ENCODE measurements at regions of chr5 and their contacts with region 1.

Region 1: DNA sequence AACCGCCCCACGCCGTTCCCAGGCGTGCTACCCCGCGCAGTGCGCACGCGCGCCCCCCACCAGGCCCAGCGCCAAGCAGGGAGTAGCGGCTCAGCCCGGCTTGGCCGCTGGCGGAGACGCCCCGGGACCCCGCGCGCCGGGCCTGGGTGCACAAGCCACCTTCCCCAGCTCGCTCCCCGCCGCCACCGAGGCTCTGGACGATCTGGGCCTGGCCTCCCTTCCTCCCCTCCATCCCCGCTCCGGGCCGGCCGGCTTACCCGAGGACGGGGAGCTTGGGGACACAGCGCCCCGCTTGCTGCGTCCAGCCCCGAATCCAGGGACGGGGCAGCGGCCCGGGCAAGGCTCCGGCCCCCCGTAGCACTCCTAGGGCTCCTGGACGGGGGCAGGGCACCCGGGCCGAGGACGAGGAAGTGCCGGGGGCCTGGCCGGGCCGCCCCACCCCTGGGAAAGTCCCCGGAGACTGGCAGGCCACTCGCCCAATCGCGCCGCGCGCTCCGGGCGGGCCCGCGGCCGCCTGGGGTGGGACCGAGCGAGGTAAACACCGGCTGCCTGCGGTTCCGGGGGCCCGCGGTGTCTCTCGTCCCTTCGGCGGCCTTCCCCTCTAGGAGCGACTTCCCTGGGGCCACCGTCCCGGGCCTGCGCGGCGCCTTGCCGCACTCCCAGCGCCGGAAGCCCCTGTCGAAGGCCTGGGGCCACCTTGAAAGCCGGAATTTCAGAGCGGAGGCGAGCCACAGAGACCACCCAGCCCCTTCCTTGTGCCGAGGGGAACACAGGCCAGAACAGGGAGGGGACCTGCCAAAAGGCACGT is at the start of gene TNIP1:
- DNase-seq: peak; percentile 91 to 97 (median 93)
- H3K4me3 ChIP-seq: peak within 1 kb of the TSS; percentile 61 to 87
- H3K4me3 Mint-ChIP-seq: peak within 1 kb of the TSS; percentile 88 to 98 (median 94)
- H3K27ac ChIP-seq: peak within 1 kb of the TSS; percentile 99
- H3K27ac Mint-ChIP-seq: peak within 1 kb of the TSS; percentile 76 to 98 (median 96)
- H3K4me1 ChIP-seq: peaks cover 89% of the 10 kb centered on the region
- H3K4me1 Mint-ChIP-seq: peaks cover 69 to 94% (median 76%) of the 10 kb centered on the region in 4 donors
- H3K27me3 ChIP-seq: no peaks in the 10 kb centered on the region
- H3K27me3 Mint-ChIP-seq: no peaks in the 10 kb centered on the region
- total RNA-seq, gene TNIP1: 227 to 233 TPM

Region 2: DNA sequence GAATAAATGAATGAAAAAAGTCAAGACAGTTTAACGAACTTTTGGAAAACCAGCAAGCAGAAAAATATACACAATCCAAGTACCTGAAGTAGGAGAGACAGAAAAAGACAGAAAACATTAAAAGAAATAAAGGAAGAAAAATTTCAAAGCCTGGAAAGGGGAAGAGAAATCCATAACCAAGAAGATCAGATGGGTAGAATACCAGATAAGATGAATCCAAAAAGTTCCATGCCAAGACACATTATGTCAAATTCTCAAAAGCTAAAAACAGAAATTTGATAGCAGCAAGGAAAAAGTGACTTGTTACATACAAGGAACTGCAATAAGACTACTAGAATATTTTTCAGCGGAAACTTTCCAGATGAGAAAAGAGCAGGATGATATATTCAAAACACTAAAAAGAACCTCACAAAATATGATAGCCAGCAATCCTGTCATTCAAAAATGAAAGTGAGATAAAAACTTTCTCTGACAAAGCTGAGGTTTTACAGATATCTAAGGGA is 168.5 kb before region 1 on chr5:
- CTCF ChIA-PET with region 1: no interaction called
- POLR2A ChIA-PET with region 1: no interaction called
- intact Hi-C with region 1: no loop called
- DNase-seq: no peak
- H3K4me3 ChIP-seq: no peak overlapping the region
- H3K4me3 Mint-ChIP-seq: no peak overlapping the region
- H3K27ac ChIP-seq: no peak overlapping the region
- H3K27ac Mint-ChIP-seq: peak overlapping the region in 1 of 7 donors; percentile 25
- H3K4me1 ChIP-seq: no peaks in the 10 kb centered on the region
- H3K4me1 Mint-ChIP-seq: no peaks in the 10 kb centered on the region
- H3K27me3 ChIP-seq: no peaks in the 10 kb centered on the region
- H3K27me3 Mint-ChIP-seq: peaks cover 1 to 2% of the 10 kb centered on the region in 2 donors

Region 3: DNA sequence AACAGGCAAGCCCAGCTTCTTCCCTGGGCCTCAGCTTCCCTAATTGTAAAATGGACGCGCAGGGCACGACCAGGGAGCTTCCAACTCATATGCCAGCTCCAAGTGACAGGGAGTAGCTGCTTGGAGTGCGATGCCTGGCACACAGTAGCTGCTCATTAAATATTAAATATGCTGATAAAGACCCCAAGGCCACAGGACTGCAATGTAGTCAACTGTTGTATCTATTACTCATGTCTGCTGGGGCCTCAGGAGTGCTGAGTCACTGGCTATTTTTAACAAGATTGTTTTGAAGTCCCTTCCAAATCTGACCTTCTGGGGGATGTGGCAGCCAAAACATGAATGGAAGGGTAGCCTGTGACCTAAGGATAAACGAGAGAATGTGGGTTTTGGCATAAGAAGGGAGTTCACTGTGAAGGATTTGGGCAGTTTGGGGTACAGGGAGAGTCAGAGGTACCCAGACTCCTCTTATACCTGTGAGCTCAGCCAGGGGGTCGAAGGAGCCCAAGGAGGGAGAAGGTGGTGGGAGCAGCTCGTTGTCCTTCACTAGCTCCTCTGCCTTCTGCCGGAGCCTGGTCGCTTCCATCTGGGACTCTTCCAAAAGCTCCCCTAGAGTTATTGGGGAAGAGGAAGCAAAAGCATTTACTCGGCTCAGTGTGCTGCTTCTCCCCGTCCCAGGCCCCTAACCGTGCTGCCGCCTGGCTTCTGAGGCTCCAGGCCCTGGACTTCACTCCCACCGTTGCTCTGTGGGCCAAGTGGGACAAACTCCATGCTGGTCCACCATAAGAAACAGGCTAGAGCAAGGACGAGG is 17.5 kb before region 1 on chr5:
- CTCF ChIA-PET with region 1: interaction called, 7 read pairs
- POLR2A ChIA-PET with region 1: interaction called, 31 read pairs
- intact Hi-C with region 1: no loop called
- DNase-seq: no peak
- H3K4me3 ChIP-seq: no peak overlapping the region
- H3K4me3 Mint-ChIP-seq: no peak overlapping the region
- H3K27ac ChIP-seq: no peak overlapping the region
- H3K27ac Mint-ChIP-seq: peak overlapping the region in 4 of 7 donors; percentile 29 to 65 (median 48)
- H3K4me1 ChIP-seq: peaks cover 60% of the 10 kb centered on the region
- H3K4me1 Mint-ChIP-seq: peaks cover 42 to 71% (median 63%) of the 10 kb centered on the region in 4 donors
- H3K27me3 ChIP-seq: no peaks in the 10 kb centered on the region
- H3K27me3 Mint-ChIP-seq: peaks cover 2 to 3% of the 10 kb centered on the region in 2 donors

Region 4: GRCh38 chr5:151093476-151093889 is 12.7 kb after region 1 on chr5:
- CTCF ChIA-PET with region 1: interaction called, 14 read pairs
- POLR2A ChIA-PET with region 1: interaction called, 106 read pairs
- intact Hi-C with region 1: loop called (anchors 1 kb)
- DNase-seq: no peak
- H3K4me3 ChIP-seq: no peak overlapping the region
- H3K4me3 Mint-ChIP-seq: peak overlapping the region in 7 of 8 donors; percentile 48 to 84 (median 81)
- H3K27ac ChIP-seq: peak overlapping the region; percentile 58
- H3K27ac Mint-ChIP-seq: peak overlapping the region; percentile 87 to 96 (median 93)
- H3K4me1 ChIP-seq: peaks cover 47% of the 10 kb centered on the region
- H3K4me1 Mint-ChIP-seq: peaks cover 42 to 72% (median 54%) of the 10 kb centered on the region in 4 donors
- H3K27me3 ChIP-seq: no peaks in the 10 kb centered on the region
- H3K27me3 Mint-ChIP-seq: no peaks in the 10 kb centered on the region

Measured in CD4-positive, alpha-beta memory T cell (primary cell).